H1 (cell line): ENCODE measurements at regions of chr5 and their contacts with region 1.

Region 1: DNA sequence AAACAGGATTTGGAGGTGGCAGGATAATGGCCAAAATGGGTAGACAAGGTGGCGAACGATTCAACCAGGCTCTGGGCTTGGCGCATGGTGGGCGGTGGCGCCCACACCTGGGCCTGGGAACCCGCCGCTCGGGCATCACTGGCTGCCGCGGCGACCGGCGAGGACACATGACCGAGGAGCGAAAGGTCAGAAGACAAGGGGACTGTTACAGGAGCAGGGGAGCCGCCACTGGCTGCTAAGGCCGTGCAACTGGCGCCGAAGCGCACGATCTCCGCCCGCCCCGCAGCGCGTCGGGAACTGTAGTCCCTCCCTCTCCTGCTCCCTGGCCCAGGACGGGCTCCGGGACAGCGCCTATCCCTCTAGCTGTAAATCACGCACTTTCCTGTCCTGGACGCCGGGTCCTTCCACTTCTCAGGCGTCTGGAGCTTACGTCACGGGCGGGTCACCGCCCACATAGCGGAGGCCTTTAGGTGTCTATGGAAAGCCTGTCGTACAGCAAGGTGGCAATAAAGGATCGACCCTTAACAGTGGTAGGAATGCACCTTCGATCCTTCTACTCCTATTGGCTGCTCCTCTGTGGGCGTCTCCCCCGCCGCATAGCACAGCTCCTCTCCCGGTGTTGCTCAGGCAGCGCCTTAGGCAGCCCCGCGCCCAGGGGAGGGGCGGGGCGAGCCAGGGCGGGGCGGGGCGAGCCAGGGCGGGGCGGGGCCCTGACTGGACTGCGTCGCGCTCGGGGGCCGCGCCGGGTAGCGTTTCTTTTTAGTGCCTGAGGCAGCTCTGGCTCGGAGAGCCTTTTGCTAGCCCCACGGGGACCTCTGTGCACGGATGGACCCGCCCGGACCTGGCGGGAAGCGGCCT is at the start of gene ICE1:
- DNase-seq: peak; percentile 95 to 99
- H3K4me3 ChIP-seq: peak within 1 kb of the TSS; percentile 57 to 98 (median 90)
- H3K27ac ChIP-seq: peak within 1 kb of the TSS; percentile 95; the same call in 1 of the 2 replicates
- H3K4me1 ChIP-seq: peaks cover 5 to 15% (median 10%) of the 10 kb centered on the region in 4 experiments
- H3K27me3 ChIP-seq: no peaks in the 10 kb centered on the region
- CTCF ChIP-seq: 0 out of 4 replicates have a peak, but pooled peaks of 1 of the 3 experiments have one; percentile 12
- EP300 ChIP-seq: no peak
- POLR2A ChIP-seq: peak; percentile 53 to 78
- RAD21 ChIP-seq: peak in 1 of 2 experiments; percentile 8; a peak in 1 of 4 replicates
- total RNA-seq, gene ICE1: 52.2 and 53.9 TPM in 2 replicates

Region 2: GRCh38 chr5:4879693-4880303 is 542.4 kb before region 1 on chr5:
- CTCF ChIA-PET with region 1: interaction called, 119 read pairs
- POLR2A ChIA-PET with region 1: interaction called, 3 read pairs
- DNase-seq: peak; percentile 61 to 97
- H3K4me3 ChIP-seq: no peak overlapping the region
- H3K27ac ChIP-seq: no peak overlapping the region
- H3K4me1 ChIP-seq: no peaks in the 10 kb centered on the region
- H3K27me3 ChIP-seq: no peaks in the 10 kb centered on the region
- CTCF ChIP-seq: peak; percentile 93 to 99 (median 98)
- EP300 ChIP-seq: no peak
- POLR2A ChIP-seq: no peak
- RAD21 ChIP-seq: peak; percentile 99 to 100

Region 3: DNA sequence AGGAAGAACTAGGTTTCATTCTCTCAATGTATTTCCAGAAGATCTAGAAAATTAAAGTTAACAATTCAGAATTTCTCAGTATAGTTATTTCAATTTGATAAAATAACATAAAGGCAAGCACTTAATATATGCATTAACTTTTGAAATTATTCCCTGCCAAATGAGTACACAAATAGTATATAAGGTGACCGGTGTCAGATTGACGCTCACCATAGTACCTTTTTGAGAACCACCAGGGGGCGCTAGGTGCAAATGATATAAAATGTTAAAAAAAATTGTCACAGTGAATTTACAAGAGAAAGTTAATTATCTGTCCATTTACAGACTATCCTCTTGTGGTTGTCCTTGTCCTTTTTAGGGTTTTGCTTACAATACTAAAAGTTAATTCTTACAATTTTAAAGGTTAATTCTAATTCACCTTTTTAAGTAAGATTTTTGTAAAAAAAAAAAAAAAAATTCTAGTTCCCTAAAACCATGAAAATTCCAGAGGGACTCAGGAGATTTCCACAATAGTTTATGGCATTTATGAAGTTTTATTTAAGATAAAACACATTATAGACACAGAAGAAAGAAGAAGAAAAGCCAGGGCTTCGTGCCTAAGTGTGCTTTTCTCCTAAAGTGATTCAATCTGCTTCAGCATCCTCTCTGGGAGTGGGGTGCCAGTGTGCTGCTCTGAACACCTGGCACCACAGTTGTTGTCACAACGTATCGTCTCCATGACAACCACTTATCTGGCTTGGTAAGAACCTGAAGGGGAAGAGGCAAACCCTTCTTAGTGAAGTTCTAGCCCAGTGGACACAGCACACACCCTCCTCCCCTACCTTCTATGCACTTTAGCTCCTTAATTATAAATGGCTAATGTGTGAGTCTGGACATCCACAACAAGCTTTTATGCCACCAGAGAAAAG is 280.3 kb before region 1 on chr5:
- CTCF ChIA-PET with region 1: interaction called, 25 read pairs
- POLR2A ChIA-PET with region 1: interaction called, 7 read pairs
- DNase-seq: no peak
- H3K4me3 ChIP-seq: peak overlapping the region in 1 of 4 experiments; percentile 92; a peak in 3 of 8 replicates
- H3K27ac ChIP-seq: no peak overlapping the region; the same call in 1 of the 2 replicates
- H3K4me1 ChIP-seq: peaks cover 3 to 9% (median 5%) of the 10 kb centered on the region in 4 experiments; a peak in 6 of 7 replicates
- H3K27me3 ChIP-seq: peaks cover 0 to 20% (median 8%) of the 10 kb centered on the region in 4 experiments; a peak in 5 of 7 replicates
- CTCF ChIP-seq: peak in 2 of 3 experiments; percentile 42 to 44; a peak in 2 of 4 replicates
- EP300 ChIP-seq: 0 out of 3 replicates have a peak, but pooled peaks of 1 of the 2 experiments have one; percentile 47
- POLR2A ChIP-seq: no peak
- RAD21 ChIP-seq: peak; percentile 74 to 79

Region 4: GRCh38 chr5:5252111-5252510 is 170.1 kb before region 1 on chr5:
- CTCF ChIA-PET with region 1: no interaction called
- POLR2A ChIA-PET with region 1: no interaction called
- DNase-seq: no peak
- H3K4me3 ChIP-seq: no peak overlapping the region
- H3K27ac ChIP-seq: no peak overlapping the region
- H3K4me1 ChIP-seq: no peaks in the 10 kb centered on the region
- H3K27me3 ChIP-seq: no peaks in the 10 kb centered on the region
- CTCF ChIP-seq: no peak
- EP300 ChIP-seq: no peak
- POLR2A ChIP-seq: no peak
- RAD21 ChIP-seq: no peak

Region 5: DNA sequence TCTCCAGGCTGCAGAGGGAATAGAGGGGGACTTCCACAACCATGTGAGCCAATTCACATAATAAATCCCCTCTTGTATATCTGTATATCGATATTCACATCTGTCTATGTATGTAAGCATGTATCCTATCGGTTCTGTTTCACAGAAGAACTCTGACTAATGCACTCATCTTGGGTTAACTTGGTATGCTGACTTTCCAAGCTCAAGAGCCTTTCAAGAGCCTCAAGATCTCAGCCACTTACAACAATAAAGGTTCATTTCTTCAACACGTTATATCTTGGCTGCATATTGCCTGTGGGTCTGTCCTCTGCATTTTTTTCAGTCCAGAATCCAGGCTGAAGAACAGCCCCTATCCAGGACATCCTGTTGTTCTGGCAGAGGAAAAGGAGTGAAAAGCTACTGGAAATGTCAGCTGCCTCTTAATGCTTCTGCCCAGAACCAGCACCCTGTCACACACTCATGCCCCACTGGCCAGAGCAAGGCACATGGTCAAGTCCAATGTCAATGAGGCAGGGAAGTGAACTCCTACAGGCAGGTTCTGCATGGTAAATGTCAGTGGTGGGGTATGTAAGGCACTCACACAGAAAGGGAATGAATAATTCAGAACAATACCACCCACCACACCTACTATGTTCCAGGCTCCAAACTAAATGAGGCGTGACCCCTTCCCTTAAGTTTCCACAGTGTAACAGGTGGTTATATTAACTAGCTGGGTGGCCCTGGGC is 91.3 kb before region 1 on chr5:
- CTCF ChIA-PET with region 1: interaction called, 16 read pairs
- POLR2A ChIA-PET with region 1: no interaction called
- DNase-seq: no peak
- H3K4me3 ChIP-seq: no peak overlapping the region
- H3K27ac ChIP-seq: no peak overlapping the region
- H3K4me1 ChIP-seq: peaks cover 3 to 18% (median 10%) of the 10 kb centered on the region in 4 experiments
- H3K27me3 ChIP-seq: no peaks in the 10 kb centered on the region
- CTCF ChIP-seq: no peak
- EP300 ChIP-seq: no peak
- POLR2A ChIP-seq: no peak
- RAD21 ChIP-seq: no peak

Region 6: GRCh38 chr5:5409151-5409810 is 12.9 kb before region 1 on chr5:
- CTCF ChIA-PET with region 1: interaction called, 15 read pairs
- POLR2A ChIA-PET with region 1: no interaction called
- DNase-seq: peak in 1 of 2 experiments; percentile 63
- H3K4me3 ChIP-seq: no peak overlapping the region
- H3K27ac ChIP-seq: no peak overlapping the region
- H3K4me1 ChIP-seq: no peaks in the 10 kb centered on the region
- H3K27me3 ChIP-seq: no peaks in the 10 kb centered on the region
- CTCF ChIP-seq: no peak
- EP300 ChIP-seq: no peak
- POLR2A ChIP-seq: no peak
- RAD21 ChIP-seq: no peak